A673 (cell line): ENCODE measurements at regions of chr12 and their contacts with region 1.

Region 1: GRCh38 chr12:104201238-104202001 is 14.2 kb upstream of the TXNRD1 start:
- DNase-seq: peak; percentile 75
- H3K4me3 ChIP-seq: no peak overlapping the region
- H3K27ac ChIP-seq: no peak overlapping the region
- H3K4me1 ChIP-seq: no peaks in the 10 kb centered on the region
- H3K27me3 ChIP-seq: no peaks in the 10 kb centered on the region
- CTCF ChIP-seq: peak; percentile 88

Region 2: DNA sequence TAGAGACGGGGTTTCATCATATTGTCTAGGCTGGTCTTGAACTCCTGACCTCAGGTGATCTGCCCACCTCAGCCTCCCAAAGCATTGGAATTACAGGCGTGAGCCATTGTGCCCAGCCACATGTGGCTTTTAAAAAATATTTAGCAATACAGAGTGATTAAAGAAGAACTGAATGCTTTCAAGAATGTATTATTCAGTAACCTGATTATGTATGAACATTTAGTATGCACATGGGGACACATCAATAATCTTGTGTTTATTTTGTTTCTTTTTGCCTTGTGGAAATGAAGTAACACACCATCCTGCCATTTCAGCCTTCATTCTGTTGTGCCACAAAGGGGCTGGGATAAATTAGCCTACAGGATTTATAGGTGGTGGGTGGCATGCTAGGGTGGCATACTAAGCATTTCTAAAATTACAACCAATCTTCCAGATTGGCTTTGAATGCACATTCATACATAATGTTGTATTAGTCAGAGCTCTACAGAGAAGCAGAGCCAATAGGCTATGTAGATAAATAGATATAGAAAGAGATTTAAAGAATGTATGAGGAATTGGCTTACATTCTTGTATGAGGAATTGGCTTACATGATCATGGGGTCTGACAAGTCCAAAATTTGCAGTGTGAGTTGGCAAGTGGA is 11.4 kb before region 1 on chr12:
- CTCF ChIA-PET with region 1: no interaction called
- POLR2A ChIA-PET with region 1: no interaction called
- intact Hi-C with region 1: no loop called
- DNase-seq: peak; percentile 10
- H3K4me3 ChIP-seq: no peak overlapping the region
- H3K27ac ChIP-seq: no peak overlapping the region
- H3K4me1 ChIP-seq: no peaks in the 10 kb centered on the region
- H3K27me3 ChIP-seq: no peaks in the 10 kb centered on the region
- CTCF ChIP-seq: no peak

Region 3: GRCh38 chr12:104215638-104216297 is 14.3 kb after region 1 on chr12 and contains the start of gene TXNRD1:
- CTCF ChIA-PET with region 1: no interaction called
- POLR2A ChIA-PET with region 1: no interaction called
- intact Hi-C with region 1: no loop called
- DNase-seq: peak; percentile 89
- H3K4me3 ChIP-seq: peak within 1 kb of the TSS; percentile 42
- H3K27ac ChIP-seq: peak within 1 kb of the TSS; percentile 53
- H3K4me1 ChIP-seq: peaks cover 22% of the 10 kb centered on the region
- H3K27me3 ChIP-seq: no peaks in the 10 kb centered on the region
- CTCF ChIP-seq: peak; percentile 84
- total RNA-seq, gene TXNRD1: 196 and 226 TPM in 2 replicates

Region 4: DNA sequence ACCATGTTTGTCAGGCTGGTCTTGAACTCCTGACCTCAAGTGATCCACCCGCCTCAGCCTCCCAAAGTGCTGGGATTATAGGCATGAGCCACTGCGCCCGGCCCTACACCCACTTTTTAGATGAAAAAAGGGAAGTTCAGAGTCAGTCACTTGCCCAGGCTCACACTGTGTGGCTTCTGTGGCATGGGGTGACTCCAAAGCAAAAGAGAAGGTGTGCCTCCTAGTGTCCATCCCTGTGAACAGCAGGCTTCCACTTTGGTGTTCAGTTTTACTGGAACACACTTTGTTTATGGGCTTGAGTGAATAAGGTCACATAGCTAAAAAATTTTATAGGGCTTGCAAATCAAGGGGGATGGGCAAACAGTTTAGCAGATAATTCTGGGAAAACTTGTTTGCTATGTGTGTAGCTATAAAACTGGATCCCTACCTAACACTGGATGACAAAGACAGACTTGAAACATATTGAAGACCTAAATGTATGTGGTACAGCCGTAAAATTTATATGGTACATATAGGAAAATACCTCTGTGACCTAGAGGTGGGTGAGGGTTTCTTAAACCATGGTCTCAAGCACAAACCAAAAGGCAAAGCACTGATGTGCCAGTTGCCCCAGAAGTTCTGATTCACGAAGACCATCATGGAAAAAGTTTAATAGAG is 157.1 kb after region 1 on chr12:
- CTCF ChIA-PET with region 1: no interaction called
- POLR2A ChIA-PET with region 1: no interaction called
- intact Hi-C with region 1: loop called (anchors 1 kb)
- DNase-seq: peak; percentile 69
- H3K4me3 ChIP-seq: no peak overlapping the region
- H3K27ac ChIP-seq: no peak overlapping the region
- H3K4me1 ChIP-seq: no peaks in the 10 kb centered on the region
- H3K27me3 ChIP-seq: no peaks in the 10 kb centered on the region
- CTCF ChIP-seq: peak; percentile 77

Region 5: GRCh38 chr12:104446646-104447421 is 245.4 kb after region 1 on chr12:
- CTCF ChIA-PET with region 1: no interaction called
- POLR2A ChIA-PET with region 1: no interaction called
- intact Hi-C with region 1: loop called (anchors 10 kb)
- DNase-seq: no peak
- H3K4me3 ChIP-seq: no peak overlapping the region
- H3K27ac ChIP-seq: no peak overlapping the region
- H3K4me1 ChIP-seq: no peaks in the 10 kb centered on the region
- H3K27me3 ChIP-seq: no peaks in the 10 kb centered on the region
- CTCF ChIP-seq: no peak

Region 6: DNA sequence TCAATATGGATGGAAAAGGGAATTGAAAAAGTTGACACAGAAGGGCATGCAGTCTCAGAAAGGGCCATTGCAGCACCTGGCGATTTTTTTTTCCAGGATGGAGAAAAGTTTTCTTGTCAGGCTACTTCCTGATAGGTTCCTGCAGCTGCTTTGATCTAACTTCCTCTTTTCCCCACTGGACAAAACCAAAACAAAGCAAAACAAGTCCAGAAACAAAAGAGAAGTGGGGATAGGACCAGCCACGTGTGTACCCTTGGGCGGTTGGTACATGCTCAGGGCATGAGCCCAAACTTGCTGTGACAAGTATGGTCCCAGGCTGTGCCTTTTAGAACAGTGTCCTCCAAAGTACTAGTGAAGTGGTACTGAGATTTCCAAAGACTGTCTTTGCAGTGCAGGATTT is 345.2 kb after region 1 on chr12:
- CTCF ChIA-PET with region 1: no interaction called
- POLR2A ChIA-PET with region 1: no interaction called
- intact Hi-C with region 1: no loop called
- DNase-seq: no peak
- H3K4me3 ChIP-seq: no peak overlapping the region
- H3K27ac ChIP-seq: no peak overlapping the region
- H3K4me1 ChIP-seq: peaks cover 6% of the 10 kb centered on the region
- H3K27me3 ChIP-seq: no peaks in the 10 kb centered on the region
- CTCF ChIP-seq: no peak

Region 7: GRCh38 chr12:105053116-105053572 is 851.7 kb after region 1 on chr12:
- CTCF ChIA-PET with region 1: no interaction called
- POLR2A ChIA-PET with region 1: no interaction called
- intact Hi-C with region 1: loop called (anchors 2 kb)
- DNase-seq: peak; percentile 84
- H3K4me3 ChIP-seq: no peak overlapping the region
- H3K27ac ChIP-seq: no peak overlapping the region
- H3K4me1 ChIP-seq: no peaks in the 10 kb centered on the region
- H3K27me3 ChIP-seq: no peaks in the 10 kb centered on the region
- CTCF ChIP-seq: peak; percentile 94